ENCODE measurements at regions of chr6 and their contacts with region 1.

Region 1: GRCh38 chr6:11585426-11586016 is 48.0 kb downstream of the TMEM170B start:
- DNase-seq: peak in 3 of 5 donors; percentile 4 to 14 (median 12)
- H3K4me3 ChIP-seq: no peak overlapping the region
- H3K4me3 Mint-ChIP-seq: no peak overlapping the region
- H3K27ac ChIP-seq: no peak overlapping the region
- H3K27ac Mint-ChIP-seq: no peak overlapping the region
- H3K4me1 ChIP-seq: no peaks in the 10 kb centered on the region
- H3K4me1 Mint-ChIP-seq: no peaks in the 10 kb centered on the region
- H3K27me3 ChIP-seq: no peaks in the 10 kb centered on the region
- H3K27me3 Mint-ChIP-seq: peaks cover 3% of the 10 kb centered on the region in 2 donors

Region 2: GRCh38 chr6:12605888-12606345 is 1020.4 kb after region 1 on chr6:
- CTCF ChIA-PET with region 1: interaction called, 3 read pairs
- POLR2A ChIA-PET with region 1: no interaction called
- intact Hi-C with region 1: loop called (anchors 2 kb)
- DNase-seq: peak in 4 of 5 donors; percentile 14 to 19 (median 18)
- H3K4me3 ChIP-seq: no peak overlapping the region
- H3K4me3 Mint-ChIP-seq: no peak overlapping the region
- H3K27ac ChIP-seq: no peak overlapping the region
- H3K27ac Mint-ChIP-seq: no peak overlapping the region
- H3K4me1 ChIP-seq: no peaks in the 10 kb centered on the region
- H3K4me1 Mint-ChIP-seq: peaks cover 0 to 3% (median 1%) of the 10 kb centered on the region in 4 donors
- H3K27me3 ChIP-seq: no peaks in the 10 kb centered on the region
- H3K27me3 Mint-ChIP-seq: peaks cover 6 to 7% of the 10 kb centered on the region in 2 donors